ENCODE measurements at regions of chr17 and their contacts with region 1.

Region 1: GRCh38 chr17:48878918-48879898 is 13.4 kb upstream of the ATP5MC1 start:
- DNase-seq: peak; percentile 44 to 80 (median 57)
- H3K4me3 ChIP-seq: no peak overlapping the region
- H3K27ac ChIP-seq: no peak overlapping the region
- H3K4me1 ChIP-seq: no peaks in the 10 kb centered on the region
- H3K27me3 ChIP-seq: no peaks in the 10 kb centered on the region
- CTCF ChIP-seq: peak; percentile 88 to 97 (median 92)
- POLR2A ChIP-seq: no peak

Region 2: GRCh38 chr17:48678141-48678971 is 200.9 kb before region 1 on chr17:
- intact Hi-C with region 1: loop called in 1 of 2 experiments (anchors 5 kb)
- DNase-seq: peak; percentile 49 to 74 (median 69)
- H3K4me3 ChIP-seq: no peak overlapping the region
- H3K27ac ChIP-seq: no peak overlapping the region
- H3K4me1 ChIP-seq: peaks cover 0 to 5% of the 10 kb centered on the region in 2 donors
- H3K27me3 ChIP-seq: peaks cover 19% of the 10 kb centered on the region
- CTCF ChIP-seq: peak; percentile 71 to 96 (median 84)
- POLR2A ChIP-seq: no peak

Region 3: GRCh38 chr17:48724251-48725003 is 154.8 kb before region 1 on chr17:
- intact Hi-C with region 1: loop called in 1 of 2 experiments (anchors 5 kb)
- DNase-seq: peak; percentile 82 to 94 (median 86)
- H3K4me3 ChIP-seq: peak overlapping the region in 1 of 4 donors; percentile 13
- H3K27ac ChIP-seq: no peak overlapping the region
- H3K4me1 ChIP-seq: peaks cover 0 to 6% of the 10 kb centered on the region in 2 donors
- H3K27me3 ChIP-seq: peaks cover 98% of the 10 kb centered on the region
- CTCF ChIP-seq: peak; percentile 42 to 71 (median 70)
- POLR2A ChIP-seq: no peak

Region 4: DNA sequence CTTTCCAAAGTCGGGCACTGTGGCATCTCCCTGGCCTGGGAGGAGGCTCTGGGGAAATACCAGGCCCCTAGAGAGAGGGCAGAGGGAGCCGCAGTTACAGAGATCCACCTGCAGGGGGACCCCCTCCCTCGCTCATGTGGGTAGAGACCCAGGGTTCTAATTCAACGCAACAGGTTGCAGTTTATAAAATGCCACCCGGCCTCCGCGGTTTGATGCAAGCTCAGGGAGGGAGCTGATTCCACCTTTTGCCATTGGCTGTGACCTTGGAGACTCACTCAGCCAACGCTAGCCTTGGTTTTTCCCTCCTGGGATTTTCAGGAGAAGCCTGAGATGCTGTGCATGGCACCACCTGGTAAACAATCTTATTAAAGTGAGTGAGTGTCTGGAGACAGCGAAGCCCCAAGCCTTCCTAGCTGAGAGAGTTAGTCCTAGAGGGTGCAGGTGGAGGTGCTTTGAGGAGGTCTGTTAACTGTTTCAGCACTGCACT is 74.2 kb before region 1 on chr17:
- intact Hi-C with region 1: loop called in 1 of 2 experiments (anchors 5 kb)
- DNase-seq: peak; percentile 33 to 81 (median 63)
- H3K4me3 ChIP-seq: no peak overlapping the region
- H3K27ac ChIP-seq: no peak overlapping the region
- H3K4me1 ChIP-seq: peaks cover 0 to 9% of the 10 kb centered on the region in 2 donors
- H3K27me3 ChIP-seq: peaks cover 4% of the 10 kb centered on the region
- CTCF ChIP-seq: peak; percentile 77 to 90 (median 88)
- POLR2A ChIP-seq: no peak

Region 5: GRCh38 chr17:48816774-48817590 is 62.2 kb before region 1 on chr17 and contains the start of gene TTLL6:
- intact Hi-C with region 1: loop called (anchors 2 to 5 kb)
- DNase-seq: peak; percentile 86 to 94 (median 88)
- H3K4me3 ChIP-seq: peak within 1 kb of the TSS in 2 of 4 donors; percentile 10 to 43
- H3K27ac ChIP-seq: peak within 1 kb of the TSS in 1 of 5 donors; percentile 30
- H3K4me1 ChIP-seq: peaks cover 6 to 14% of the 10 kb centered on the region in 2 donors
- H3K27me3 ChIP-seq: no peaks in the 10 kb centered on the region
- CTCF ChIP-seq: no peak
- POLR2A ChIP-seq: no peak
- total RNA-seq, gene TTLL6: under 0.01 to 0.55 (median 0.40) TPM in 5 of 9 donors, not detected in the others

Region 6: DNA sequence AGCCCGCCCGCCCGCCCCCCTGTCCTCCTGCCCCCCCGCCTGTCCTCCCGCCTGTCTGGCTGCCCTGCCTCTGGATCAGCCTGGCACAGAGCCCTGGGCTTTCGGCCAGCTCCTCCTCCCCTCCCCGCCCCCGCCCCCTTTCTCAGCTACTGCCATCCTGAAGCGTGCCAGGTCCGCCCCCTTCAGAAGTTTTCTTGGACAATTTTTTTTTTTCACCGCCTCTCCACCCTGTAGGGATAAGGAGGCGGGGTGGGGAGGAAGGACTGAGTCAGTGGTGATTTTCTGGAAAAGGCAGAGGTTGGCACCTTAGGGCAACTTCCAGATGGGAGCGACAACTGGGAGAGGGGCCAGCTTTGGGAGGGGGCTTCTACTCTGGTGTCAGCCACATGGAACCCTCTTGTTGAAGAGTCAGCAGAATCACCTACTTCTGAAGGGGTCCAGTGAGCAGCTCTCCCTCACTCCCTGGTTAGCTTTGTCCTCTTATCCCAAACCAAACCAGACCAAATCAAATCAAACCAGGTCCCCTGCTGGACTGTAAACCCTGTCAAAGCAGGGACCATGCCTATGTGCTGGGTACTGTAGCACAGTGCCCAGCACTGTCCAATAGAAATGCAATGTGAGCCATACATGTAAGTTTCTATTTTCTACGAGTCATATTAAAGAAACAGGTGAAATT is 137.7 kb after region 1 on chr17:
- intact Hi-C with region 1: no loop called
- DNase-seq: peak; percentile 42 to 76 (median 66)
- H3K4me3 ChIP-seq: no peak overlapping the region
- H3K27ac ChIP-seq: no peak overlapping the region
- H3K4me1 ChIP-seq: no peaks in the 10 kb centered on the region
- H3K27me3 ChIP-seq: peaks cover 37% of the 10 kb centered on the region
- CTCF ChIP-seq: no peak
- POLR2A ChIP-seq: no peak